GM10248 (cell line): ENCODE measurements at regions of chr14 and their contacts with region 1.

Region 1: DNA sequence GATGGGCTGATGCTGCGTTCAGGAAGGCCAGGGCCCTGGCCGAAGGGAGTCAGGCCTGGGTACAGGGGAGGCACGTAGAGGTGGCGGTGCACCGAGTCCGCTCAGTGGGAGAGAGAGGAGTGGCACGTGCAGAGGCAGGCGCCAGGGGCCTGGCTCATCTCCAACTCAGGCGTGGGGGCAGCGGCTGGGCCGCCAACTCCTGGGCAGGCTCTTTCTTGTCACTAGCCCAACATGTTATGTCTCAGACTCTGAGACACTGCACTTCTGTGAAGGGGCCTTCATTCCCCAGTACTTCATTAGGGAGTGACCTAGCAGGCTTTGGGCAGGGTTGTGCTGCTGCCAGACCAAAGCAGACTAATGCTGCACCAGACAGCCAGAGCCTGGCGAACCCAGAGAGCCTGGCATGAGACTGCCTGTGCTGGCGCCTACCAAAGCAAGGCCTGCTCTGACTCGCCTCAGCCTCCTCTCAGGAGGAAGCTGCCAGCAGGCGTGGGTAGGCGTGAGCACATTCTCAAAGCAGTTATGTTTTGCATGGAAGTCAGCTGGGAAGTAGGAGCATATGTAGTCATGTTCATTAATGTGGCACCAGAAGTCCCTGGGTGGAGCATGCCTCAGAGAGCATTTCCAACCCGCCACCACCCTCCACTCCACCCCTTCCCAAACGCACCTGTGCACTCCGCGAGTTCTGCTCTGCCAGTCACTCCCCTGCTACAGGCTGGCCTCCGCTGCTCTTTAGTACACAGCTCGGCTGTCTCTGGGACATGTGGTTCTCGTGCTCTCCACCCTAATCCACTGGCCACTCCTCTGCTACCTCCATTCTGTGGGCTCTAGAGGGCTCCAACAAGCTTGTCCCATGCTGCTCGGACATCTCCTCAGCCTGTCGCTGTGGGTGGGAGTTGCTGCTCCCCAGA is 9.7 kb downstream of the CKB start:
- DNase-seq: no peak
- CTCF ChIP-seq: no peak

Region 2: DNA sequence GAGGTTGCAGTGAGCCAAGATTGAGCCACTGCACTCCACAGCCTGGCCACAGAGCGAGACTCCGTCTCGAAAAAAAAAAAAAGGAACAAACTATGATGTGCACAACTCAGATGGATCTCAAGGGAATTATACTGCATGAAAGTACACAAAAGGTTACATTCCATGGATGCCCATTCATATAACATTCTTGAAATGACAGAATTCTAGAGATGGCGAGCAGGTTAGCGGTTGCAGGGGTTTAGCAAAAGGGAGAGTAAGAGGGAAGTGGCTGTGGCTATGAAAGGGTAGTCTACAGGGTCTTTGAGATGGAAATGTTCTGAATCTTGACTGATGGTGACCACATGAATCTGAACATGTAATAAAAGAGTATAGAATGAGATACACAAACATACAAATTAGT is 40.0 kb before region 1 on chr14:
- CTCF ChIA-PET with region 1: no interaction called
- POLR2A ChIA-PET with region 1: no interaction called
- DNase-seq: no peak
- CTCF ChIP-seq: no peak

Region 3: DNA sequence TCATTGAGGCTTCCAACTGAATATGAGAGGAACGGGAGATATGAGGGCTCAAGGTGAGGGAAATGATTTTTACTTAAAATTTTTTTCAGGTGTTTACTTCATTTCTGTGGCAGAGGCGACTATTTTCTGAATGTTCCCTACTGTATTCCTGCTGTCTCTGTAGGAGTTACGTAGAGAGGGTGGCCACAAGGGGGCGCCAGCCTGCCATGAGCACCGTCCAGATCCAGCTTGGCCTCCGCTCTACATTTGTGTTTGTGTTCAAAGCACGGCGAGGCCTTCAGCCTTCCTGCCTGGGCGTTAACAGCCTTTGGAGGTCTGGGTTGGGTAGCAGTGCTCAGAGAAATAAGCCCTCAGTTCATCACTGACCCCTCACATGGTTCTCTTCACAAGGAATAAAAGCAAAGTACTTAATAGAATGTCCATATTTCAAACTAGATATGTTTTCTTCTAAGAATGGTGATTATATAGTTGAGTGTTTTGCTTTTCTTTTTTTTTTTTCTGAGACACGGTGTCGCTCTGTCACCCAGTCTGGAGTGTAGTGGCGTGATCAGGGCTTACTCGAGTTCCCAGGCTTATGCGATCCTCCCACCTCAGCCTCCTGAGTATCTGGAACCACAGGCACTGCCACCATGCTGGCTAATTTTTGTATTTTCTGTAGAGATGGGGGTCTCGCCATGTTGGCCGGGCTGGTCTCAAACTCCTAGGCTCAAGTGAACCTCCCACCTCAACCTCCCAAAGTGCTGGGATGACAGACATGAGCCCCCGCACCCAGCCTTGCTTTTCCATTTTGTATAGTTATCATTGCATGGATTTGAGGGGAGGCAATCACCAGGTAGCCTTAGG is 12.6 kb before region 1 on chr14:
- CTCF ChIA-PET with region 1: interaction called, 39 read pairs
- POLR2A ChIA-PET with region 1: no interaction called
- DNase-seq: peak; percentile 81
- CTCF ChIP-seq: peak; percentile 90